ENCODE measurements at regions of chr16 and their contacts with region 1.

Region 1: DNA sequence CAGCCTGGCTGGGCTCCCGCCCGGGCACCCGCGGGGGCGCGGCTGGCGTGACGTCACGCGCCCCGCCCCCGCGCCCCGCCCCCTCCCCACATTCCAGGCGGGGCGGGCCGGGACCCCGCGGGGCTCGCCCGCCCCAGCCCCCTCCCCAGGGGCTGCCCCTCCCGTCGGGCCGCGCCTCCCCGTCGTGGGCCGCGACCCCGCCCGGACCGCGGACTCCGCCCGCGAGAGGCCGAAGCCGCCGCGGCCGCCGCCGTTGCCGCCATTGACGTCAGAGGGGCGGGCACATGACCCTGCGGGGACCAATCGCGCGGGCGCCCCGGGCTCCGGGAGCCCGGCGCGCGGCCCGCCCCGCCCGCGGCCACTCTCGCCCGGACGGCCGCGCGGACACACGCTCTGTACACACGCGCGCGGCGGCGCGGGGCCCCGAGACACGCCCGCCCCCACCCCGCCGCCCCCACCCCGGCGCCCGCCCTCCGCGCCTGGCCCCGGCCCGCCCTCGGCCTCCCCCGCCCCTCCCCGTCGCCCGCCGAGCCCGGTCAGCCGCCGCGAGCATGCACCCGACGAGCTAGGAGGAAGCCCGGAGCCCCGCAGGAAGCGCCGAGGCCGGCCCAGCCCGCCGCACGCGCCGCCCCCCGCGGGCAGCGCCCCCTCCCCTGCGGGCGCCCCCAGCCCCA is at the start of gene CMIP:
- DNase-seq: peak; percentile 60
- H3K4me3 ChIP-seq: peak within 1 kb of the TSS; percentile 96 to 97 (median 97)
- H3K27ac ChIP-seq: peak within 1 kb of the TSS; percentile 81
- H3K4me1 ChIP-seq: peaks cover 20% of the 10 kb centered on the region
- H3K27me3 ChIP-seq: peaks cover 13 to 30% of the 10 kb centered on the region in 2 experiments
- CTCF ChIP-seq: no peak
- POLR2A ChIP-seq: no peak
- total RNA-seq, gene CMIP: 82.4 and 101 TPM in 2 replicates

Region 2: GRCh38 chr16:81469710-81470535 is 25.3 kb after region 1 on chr16:
- CTCF ChIA-PET with region 1: no interaction called
- POLR2A ChIA-PET with region 1: interaction called, 4 read pairs
- dilution Hi-C with region 1: no loop called
- intact Hi-C with region 1: loop called (anchors 1 kb)
- DNase-seq: no peak
- H3K4me3 ChIP-seq: no peak overlapping the region
- H3K27ac ChIP-seq: no peak overlapping the region
- H3K4me1 ChIP-seq: peaks cover 22% of the 10 kb centered on the region
- H3K27me3 ChIP-seq: no peaks in the 10 kb centered on the region
- CTCF ChIP-seq: no peak
- POLR2A ChIP-seq: no peak

Region 3: GRCh38 chr16:81513204-81514040 is 68.8 kb after region 1 on chr16:
- CTCF ChIA-PET with region 1: no interaction called
- POLR2A ChIA-PET with region 1: no interaction called
- dilution Hi-C with region 1: no loop called
- intact Hi-C with region 1: loop called (anchors 2 kb)
- DNase-seq: peak; percentile 84
- H3K4me3 ChIP-seq: no peak overlapping the region
- H3K27ac ChIP-seq: peak overlapping the region; percentile 51
- H3K4me1 ChIP-seq: peaks cover 66% of the 10 kb centered on the region
- H3K27me3 ChIP-seq: no peaks in the 10 kb centered on the region
- CTCF ChIP-seq: no peak
- POLR2A ChIP-seq: no peak

Region 4: GRCh38 chr16:81544664-81545271 is 100.2 kb after region 1 on chr16:
- CTCF ChIA-PET with region 1: no interaction called
- POLR2A ChIA-PET with region 1: no interaction called
- dilution Hi-C with region 1: no loop called
- intact Hi-C with region 1: loop called (anchors 2 kb)
- DNase-seq: no peak
- H3K4me3 ChIP-seq: no peak overlapping the region
- H3K27ac ChIP-seq: no peak overlapping the region
- H3K4me1 ChIP-seq: peaks cover 31% of the 10 kb centered on the region
- H3K27me3 ChIP-seq: no peaks in the 10 kb centered on the region
- CTCF ChIP-seq: no peak
- POLR2A ChIP-seq: no peak

Region 5: GRCh38 chr16:81696961-81697615 is 252.5 kb after region 1 on chr16:
- CTCF ChIA-PET with region 1: interaction called, 5 read pairs
- POLR2A ChIA-PET with region 1: no interaction called
- dilution Hi-C with region 1: no loop called
- intact Hi-C with region 1: loop called (anchors 5 kb)
- DNase-seq: peak; percentile 79
- H3K4me3 ChIP-seq: no peak overlapping the region
- H3K27ac ChIP-seq: peak overlapping the region; percentile 98
- H3K4me1 ChIP-seq: peaks cover 62% of the 10 kb centered on the region
- H3K27me3 ChIP-seq: no peaks in the 10 kb centered on the region
- CTCF ChIP-seq: peak; percentile 79 to 84
- POLR2A ChIP-seq: no peak

Measured in endothelial cell of umbilical vein (primary cell).